ENCODE measurements at regions of chr17 and their contacts with region 1.

Region 1: GRCh38 chr17:39450847-39451581 is at the start of gene MED1:
- DNase-seq: peak; percentile 97
- total RNA-seq, gene MED1: 10.0 and 29.8 TPM in 2 replicates

Region 2: DNA sequence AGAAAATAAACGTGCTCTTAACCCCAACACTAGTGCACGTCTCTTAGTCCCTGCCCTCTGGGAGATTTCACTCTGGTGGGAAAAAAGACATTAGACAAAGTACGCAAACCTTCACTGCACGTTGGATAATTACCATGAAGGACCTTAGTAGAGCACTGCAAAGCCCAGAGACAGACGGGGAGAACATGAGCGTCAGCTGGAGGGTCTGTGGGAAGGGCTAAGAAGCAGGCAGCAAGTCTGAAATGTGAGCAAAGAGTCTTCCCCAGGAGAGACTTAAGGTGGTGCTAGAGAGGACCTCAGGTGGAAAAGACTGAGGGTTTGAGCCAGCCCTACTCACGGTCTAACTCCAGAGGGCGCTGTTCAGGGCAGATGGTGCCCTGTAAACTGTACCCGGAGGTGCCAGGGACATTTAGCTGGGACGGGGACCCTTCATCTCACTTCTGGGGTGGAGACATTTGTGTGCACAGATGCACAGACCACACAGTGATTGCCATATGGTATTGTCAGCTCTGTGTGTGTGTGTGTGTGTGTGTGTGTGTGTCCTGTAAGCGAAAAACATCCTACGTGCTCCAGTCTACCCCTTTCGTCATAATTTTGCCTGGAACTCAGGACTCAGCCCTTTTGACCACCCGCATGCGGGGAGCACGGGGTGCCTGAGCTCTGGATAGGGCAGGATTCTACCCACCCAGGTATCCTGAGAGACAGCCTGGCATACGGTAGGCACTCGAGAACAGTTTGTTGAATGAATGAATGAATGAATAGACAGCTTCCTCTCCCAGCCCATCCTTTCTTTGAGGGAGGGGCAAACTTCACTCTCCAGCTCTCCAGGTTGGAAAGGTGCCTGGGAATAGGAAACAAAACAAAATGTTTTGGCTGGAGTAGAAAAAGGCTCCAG is 215.2 kb before region 1 on chr17:
- in situ Hi-C with region 1: no loop called
- DNase-seq: peak; percentile 33

Region 3: GRCh38 chr17:39318636-39319035 is 132.4 kb before region 1 on chr17:
- in situ Hi-C with region 1: no loop called
- DNase-seq: no peak

Region 4: GRCh38 chr17:39404542-39405378 is 46.3 kb before region 1 on chr17:
- in situ Hi-C with region 1: loop called (anchors 5 kb)
- DNase-seq: peak; percentile 46

Region 5: DNA sequence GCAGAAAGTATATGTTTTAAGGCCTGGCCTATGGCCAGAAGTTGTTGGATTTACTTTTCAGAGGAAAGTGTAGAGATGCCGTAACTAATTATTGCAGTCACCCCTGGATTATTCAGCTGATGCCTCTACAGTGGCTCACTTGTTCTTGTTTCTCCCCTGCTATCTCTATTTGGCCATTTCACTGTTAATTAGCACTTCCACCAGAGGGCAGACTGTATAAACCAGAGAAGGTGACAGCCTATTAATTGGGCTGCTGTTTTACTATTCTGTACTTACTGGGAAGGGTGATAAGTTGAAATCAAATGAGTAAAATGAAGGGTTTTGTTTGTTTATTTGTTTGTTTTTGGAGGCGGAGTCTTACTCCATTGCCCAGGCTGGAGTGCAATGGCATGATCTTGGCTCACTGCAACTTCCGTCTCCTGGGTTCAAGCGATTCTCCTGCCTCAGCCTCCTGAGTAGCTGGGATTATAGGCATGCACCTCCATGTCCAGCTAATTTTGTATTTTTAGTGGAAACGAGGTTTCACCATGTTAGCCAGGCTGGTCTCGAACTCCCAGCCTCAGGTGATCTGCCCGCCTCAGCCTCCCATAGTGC is 76.3 kb after region 1 on chr17:
- in situ Hi-C with region 1: no loop called
- DNase-seq: peak; percentile 37

Region 6: DNA sequence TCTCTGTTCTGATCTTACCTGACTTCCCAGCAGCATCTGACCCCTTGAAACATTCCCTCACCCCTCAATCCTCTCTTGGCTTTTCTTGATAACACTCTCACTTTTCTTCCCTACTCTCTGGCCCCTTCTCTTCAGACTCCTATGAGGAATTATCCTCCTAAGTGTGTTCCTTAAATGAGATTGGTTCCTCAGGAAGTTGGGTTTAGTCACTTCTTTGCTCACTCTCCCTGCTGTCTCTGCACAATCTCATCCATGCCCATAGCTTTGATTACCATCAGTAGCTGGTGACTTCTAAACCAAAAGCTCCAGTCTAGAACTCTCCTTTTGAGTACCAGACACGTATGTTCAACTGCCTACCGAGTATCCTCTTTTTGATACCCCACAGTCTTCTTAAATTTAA is 590.2 kb after region 1 on chr17:
- in situ Hi-C with region 1: no loop called
- DNase-seq: no peak